ENCODE measurements at regions of chr9 and their contacts with region 1.

Region 1: GRCh38 chr9:128617943-128618342 is 38.7 kb downstream of the DYNC2I2 start:
- DNase-seq: no peak
- ATAC-seq: peak in 2 of 8 donors; percentile 19 to 54
- H3K4me3 ChIP-seq: no peak overlapping the region
- H3K27ac ChIP-seq: no peak overlapping the region
- H3K4me1 ChIP-seq: no peaks in the 10 kb centered on the region
- H3K27me3 ChIP-seq: no peaks in the 10 kb centered on the region
- CTCF ChIP-seq: no peak

Region 2: GRCh38 chr9:127754099-127755050 is 863.6 kb before region 1 on chr9:
- intact Hi-C with region 1: no loop called
- DNase-seq: no peak
- ATAC-seq: peak in 5 of 8 donors; percentile 9 to 31 (median 18)
- H3K4me3 ChIP-seq: peak overlapping the region in 8 of 10 donors; percentile 24 to 51 (median 42)
- H3K27ac ChIP-seq: peak overlapping the region in 9 of 10 donors; percentile 60 to 86 (median 69)
- H3K4me1 ChIP-seq: peaks cover 6 to 75% (median 22%) of the 10 kb centered on the region in 9 donors
- H3K27me3 ChIP-seq: peaks cover 0 to 45% (median 27%) of the 10 kb centered on the region in 7 donors
- CTCF ChIP-seq: no peak

Region 3: DNA sequence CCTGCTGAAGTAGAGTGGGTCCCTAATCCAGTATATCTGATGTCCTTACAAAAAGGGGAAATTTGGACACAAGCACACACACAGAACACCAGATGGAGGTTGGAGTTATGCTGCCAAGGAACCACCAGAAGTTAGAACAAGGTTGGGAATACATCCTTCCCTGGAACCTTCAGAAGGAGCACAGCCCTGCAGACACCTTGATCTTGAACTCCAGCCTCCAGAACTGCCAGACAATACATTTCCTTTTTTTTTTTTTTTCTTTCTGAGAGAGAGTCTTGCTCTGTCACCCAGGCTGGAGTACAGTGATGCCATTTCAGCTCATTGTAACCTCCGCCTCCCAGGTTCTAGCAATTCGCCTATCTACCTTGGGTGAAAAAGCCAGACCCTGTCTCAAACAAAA is 169.2 kb before region 1 on chr9:
- intact Hi-C with region 1: no loop called
- DNase-seq: no peak
- ATAC-seq: no peak
- H3K4me3 ChIP-seq: no peak overlapping the region
- H3K27ac ChIP-seq: no peak overlapping the region
- H3K4me1 ChIP-seq: no peaks in the 10 kb centered on the region
- H3K27me3 ChIP-seq: no peaks in the 10 kb centered on the region
- CTCF ChIP-seq: no peak

Region 4: DNA sequence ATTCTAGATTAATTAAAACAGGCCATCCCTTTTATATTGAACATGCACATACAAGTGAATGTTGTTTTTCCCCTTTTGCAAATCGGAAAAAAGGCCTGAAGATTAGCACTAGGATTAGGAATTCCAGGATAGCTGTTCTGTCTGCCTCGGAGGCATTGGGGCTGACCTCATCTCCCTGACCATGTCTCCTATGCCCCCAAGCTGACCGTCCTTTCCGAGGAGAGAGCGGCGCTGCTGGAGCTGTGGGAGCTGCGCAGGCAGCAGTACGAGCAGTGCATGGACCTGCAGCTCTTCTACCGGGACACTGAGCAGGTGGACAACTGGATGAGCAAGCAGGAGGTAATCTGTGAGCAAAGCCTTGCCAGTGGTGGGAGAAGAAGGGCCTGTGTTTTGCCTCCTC is 37.2 kb before region 1 on chr9:
- intact Hi-C with region 1: loop called in 2 of 10 experiments (anchors 5 kb)
- DNase-seq: no peak
- ATAC-seq: no peak
- H3K4me3 ChIP-seq: no peak overlapping the region
- H3K27ac ChIP-seq: no peak overlapping the region
- H3K4me1 ChIP-seq: peaks cover 0 to 8% (median 4%) of the 10 kb centered on the region in 9 donors
- H3K27me3 ChIP-seq: no peaks in the 10 kb centered on the region
- CTCF ChIP-seq: no peak

Region 5: GRCh38 chr9:128600099-128600498 is 17.8 kb before region 1 on chr9:
- intact Hi-C with region 1: loop called in 1 of 10 experiments (anchors 2 kb)
- DNase-seq: no peak
- ATAC-seq: no peak
- H3K4me3 ChIP-seq: no peak overlapping the region
- H3K27ac ChIP-seq: no peak overlapping the region
- H3K4me1 ChIP-seq: no peaks in the 10 kb centered on the region
- H3K27me3 ChIP-seq: no peaks in the 10 kb centered on the region
- CTCF ChIP-seq: no peak

Measured in heart right ventricle (tissue), 16 donors.